ENCODE measurements at regions of chr12 and their contacts with region 1.

Region 1: GRCh38 chr12:1966561-1967226 is 37.6 kb downstream of the DCP1B start:
- DNase-seq: no peak
- H3K4me3 ChIP-seq: no peak overlapping the region
- H3K27ac ChIP-seq: no peak overlapping the region
- H3K4me1 ChIP-seq: peaks cover 2 to 25% of the 10 kb centered on the region in 2 donors
- H3K27me3 ChIP-seq: no peaks in the 10 kb centered on the region
- CTCF ChIP-seq: no peak

Region 2: DNA sequence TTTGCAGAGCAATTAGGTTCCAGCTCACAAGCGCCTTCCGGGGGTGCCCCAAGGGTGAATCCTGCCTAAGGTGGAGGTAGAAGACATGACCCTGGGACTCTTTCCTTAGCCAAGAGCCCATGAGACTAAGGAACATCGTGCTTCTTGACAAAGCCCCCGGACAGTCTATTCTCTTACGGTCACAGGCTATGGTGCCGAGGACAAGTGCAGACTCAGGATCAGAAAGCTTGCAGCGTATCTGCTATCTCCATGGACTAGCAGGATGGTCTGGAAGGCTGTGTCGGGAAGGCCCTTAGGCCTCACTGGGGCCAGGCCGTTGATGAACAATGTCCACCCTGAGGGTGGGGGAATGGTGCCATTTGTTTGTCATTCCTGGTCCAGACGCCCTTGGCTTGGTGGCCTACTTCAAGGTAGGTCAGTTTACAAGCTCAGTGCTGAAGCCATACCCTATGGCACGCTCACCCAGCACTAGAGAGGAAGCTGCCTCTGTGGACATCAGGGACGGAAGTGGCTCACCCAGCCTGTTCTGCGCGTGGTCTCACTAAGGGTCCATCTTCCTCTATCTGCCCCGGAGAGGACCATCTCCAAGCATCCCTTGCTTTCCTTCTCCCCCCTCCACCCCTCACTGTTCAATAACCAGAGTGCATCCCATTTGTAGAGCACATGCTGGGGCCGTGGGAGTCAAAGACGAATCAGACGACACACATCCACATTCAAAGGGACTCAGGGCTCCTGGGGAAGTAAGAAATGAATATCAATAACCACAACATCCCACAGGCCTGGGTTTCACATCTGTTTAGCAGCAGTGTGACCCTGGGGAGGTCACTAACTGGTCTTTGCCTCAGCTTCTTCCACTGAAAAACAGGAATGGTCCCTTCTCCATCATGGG is 1945.1 kb before region 1 on chr12:
- intact Hi-C with region 1: no loop called
- DNase-seq: no peak
- H3K4me3 ChIP-seq: no peak overlapping the region
- H3K27ac ChIP-seq: no peak overlapping the region
- H3K4me1 ChIP-seq: no peaks in the 10 kb centered on the region
- H3K27me3 ChIP-seq: no peaks in the 10 kb centered on the region
- CTCF ChIP-seq: no peak

Region 3: GRCh38 chr12:1444142-1444516 is 522.6 kb before region 1 on chr12:
- intact Hi-C with region 1: no loop called
- DNase-seq: no peak
- H3K4me3 ChIP-seq: peak overlapping the region; percentile 29 to 47
- H3K27ac ChIP-seq: peak overlapping the region; percentile 56 to 61
- H3K4me1 ChIP-seq: peaks cover 0 to 6% of the 10 kb centered on the region in 2 donors
- H3K27me3 ChIP-seq: no peaks in the 10 kb centered on the region
- CTCF ChIP-seq: no peak

Region 4: GRCh38 chr12:2009623-2010022 is 42.9 kb after region 1 on chr12:
- intact Hi-C with region 1: loop called (anchors 5 kb)
- DNase-seq: no peak
- H3K4me3 ChIP-seq: no peak overlapping the region
- H3K27ac ChIP-seq: no peak overlapping the region
- H3K4me1 ChIP-seq: peaks cover 0 to 4% of the 10 kb centered on the region in 2 donors
- H3K27me3 ChIP-seq: no peaks in the 10 kb centered on the region
- CTCF ChIP-seq: no peak

Measured in ascending aorta (tissue), 2 donors.